GM12878 (cell line): ENCODE measurements at regions of chr7 and their contacts with region 1.

Region 1: DNA sequence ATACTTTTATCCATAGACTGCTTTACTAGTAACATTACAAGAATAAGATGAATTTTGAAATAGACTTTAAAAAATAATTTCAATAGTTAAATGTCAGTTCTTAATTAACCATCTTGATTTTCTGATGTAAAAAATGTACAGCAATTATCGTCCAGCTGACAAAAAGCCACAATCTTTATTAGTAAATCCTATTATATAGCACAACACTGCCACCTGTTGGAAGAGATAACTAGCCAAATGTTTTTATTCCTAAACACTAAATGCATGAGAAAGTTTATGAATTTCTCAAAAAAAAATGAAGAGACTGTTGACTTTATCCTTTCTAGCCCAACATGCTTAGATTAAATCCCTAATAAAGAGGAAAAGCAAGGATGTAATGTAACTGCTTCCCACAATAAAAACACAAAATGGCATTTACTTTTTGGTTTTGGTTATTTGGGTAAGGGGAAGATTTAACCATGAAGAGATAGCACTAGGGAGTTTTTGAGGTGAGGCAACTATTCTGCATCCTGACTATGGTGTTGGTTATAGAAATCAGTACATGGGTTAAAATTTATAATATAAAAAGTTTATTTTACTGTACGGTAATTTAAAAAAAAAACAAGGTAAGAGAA is 8.0 kb downstream of the COA1 start:
- DNase-seq: no peak
- ATAC-seq: peak; percentile 52
- H3K4me3 ChIP-seq: no peak overlapping the region
- H3K27ac ChIP-seq: no peak overlapping the region
- H3K4me1 ChIP-seq: no peaks in the 10 kb centered on the region
- H3K27me3 ChIP-seq: no peaks in the 10 kb centered on the region
- CTCF ChIP-seq: peak; percentile 40 to 64 (median 44); a peak in 5 of 6 replicates
- EP300 ChIP-seq: no peak
- POLR2A ChIP-seq: no peak
- RAD21 ChIP-seq: peak; percentile 68

Region 2: GRCh38 chr7:43799589-43799988 is 78.3 kb after region 1 on chr7:
- CTCF ChIA-PET with region 1: interaction called, 8 read pairs
- POLR2A ChIA-PET with region 1: no interaction called
- RAD21 ChIA-PET with region 1: interaction called, 10 read pairs
- SMC1A ChIA-PET with region 1: interaction called, 8 read pairs
- in situ Hi-C with region 1: no loop called
- intact Hi-C with region 1: no loop called
- DNase-seq: no peak
- ATAC-seq: peak; percentile 63
- H3K4me3 ChIP-seq: no peak overlapping the region
- H3K27ac ChIP-seq: no peak overlapping the region
- H3K4me1 ChIP-seq: no peaks in the 10 kb centered on the region
- H3K27me3 ChIP-seq: no peaks in the 10 kb centered on the region
- CTCF ChIP-seq: peak; percentile 16 to 30 (median 21); a peak in 1 of 6 replicates
- EP300 ChIP-seq: no peak
- POLR2A ChIP-seq: no peak
- RAD21 ChIP-seq: peak; percentile 29; the same call in 1 of the 2 replicates

Region 3: GRCh38 chr7:43906331-43907010 is 185.2 kb after region 1 on chr7 and contains the start of gene URGCP:
- CTCF ChIA-PET with region 1: no interaction called
- POLR2A ChIA-PET with region 1: no interaction called
- RAD21 ChIA-PET with region 1: no interaction called
- SMC1A ChIA-PET with region 1: no interaction called
- in situ Hi-C with region 1: no loop called
- intact Hi-C with region 1: no loop called
- DNase-seq: no peak
- ATAC-seq: peak; percentile 90
- H3K4me3 ChIP-seq: peak within 1 kb of the TSS; percentile 66
- H3K27ac ChIP-seq: peak within 1 kb of the TSS; percentile 52
- H3K4me1 ChIP-seq: peaks cover 14% of the 10 kb centered on the region
- H3K27me3 ChIP-seq: no peaks in the 10 kb centered on the region
- CTCF ChIP-seq: no peak
- EP300 ChIP-seq: no peak
- POLR2A ChIP-seq: peak; percentile 82
- RAD21 ChIP-seq: no peak
- polyA plus RNA-seq, gene URGCP: 2.0 to 3.9 TPM